ENCODE measurements at regions of chr22 and their contacts with region 1.

Region 1: GRCh38 chr22:17121227-17122195 is at the start of gene TMEM121B:
- DNase-seq: peak; percentile 72 to 78 (median 76)
- H3K4me3 ChIP-seq: peak within 1 kb of the TSS; percentile 44 to 79 (median 56)
- H3K4me3 Mint-ChIP-seq: peak within 1 kb of the TSS; percentile 87 to 94
- H3K27ac ChIP-seq: peak within 1 kb of the TSS in 1 of 2 donors; percentile 48
- H3K27ac Mint-ChIP-seq: peak within 1 kb of the TSS in 3 of 7 donors; percentile 38 to 60 (median 58)
- H3K4me1 ChIP-seq: peaks cover 43 to 48% of the 10 kb centered on the region in 2 donors
- H3K4me1 Mint-ChIP-seq: peaks cover 44% of the 10 kb centered on the region
- H3K27me3 ChIP-seq: peaks cover 3 to 8% of the 10 kb centered on the region in 2 donors
- H3K27me3 Mint-ChIP-seq: peaks cover 0 to 21% (median 8%) of the 10 kb centered on the region in 3 donors
- CTCF ChIP-seq: no peak
- polyA plus RNA-seq, gene TMEM121B: 1.4 to 3.2 (median 1.9) TPM

Region 2: DNA sequence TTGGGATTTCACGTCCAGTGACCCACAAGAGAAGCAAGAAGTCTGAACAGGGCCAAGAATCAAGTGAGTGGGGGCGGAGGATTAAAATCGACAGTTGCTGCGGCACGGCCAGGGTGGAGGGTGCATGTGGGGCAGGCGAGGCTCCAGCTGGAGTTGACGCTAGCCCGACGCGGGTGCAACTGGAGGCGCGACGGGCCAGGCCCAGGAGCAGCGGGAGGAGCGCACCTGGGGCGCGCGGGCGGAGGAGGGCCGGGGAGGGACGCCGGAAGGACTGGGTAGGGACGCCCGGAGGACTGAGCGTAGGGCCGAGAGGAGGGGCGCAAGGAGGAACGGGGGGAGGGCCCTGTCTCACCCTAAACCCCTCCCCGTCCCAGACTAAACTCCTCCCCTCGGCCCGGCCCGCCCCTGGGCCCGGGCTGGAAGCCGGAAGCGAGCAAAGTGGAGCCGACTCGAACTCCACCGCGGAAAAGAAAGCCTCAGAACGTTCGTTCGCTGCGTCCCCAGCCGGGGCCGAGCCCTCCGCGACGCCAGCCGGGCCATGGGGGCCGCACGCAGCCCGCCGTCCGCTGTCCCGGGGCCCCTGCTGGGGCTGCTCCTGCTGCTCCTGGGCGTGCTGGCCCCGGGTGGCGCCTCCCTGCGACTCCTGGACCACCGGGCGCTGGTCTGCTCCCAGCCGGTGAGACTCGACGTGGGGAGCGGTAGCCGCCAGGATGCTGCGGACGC is 36.8 kb before region 1 on chr22 and contains the start of gene IL17RA:
- intact Hi-C with region 1: loop called in 1 of 2 experiments (anchors 5 kb)
- DNase-seq: peak; percentile 84 to 90 (median 86)
- H3K4me3 ChIP-seq: peak within 1 kb of the TSS; percentile 89 to 91 (median 91)
- H3K4me3 Mint-ChIP-seq: peak within 1 kb of the TSS; percentile 96 to 99
- H3K27ac ChIP-seq: peak within 1 kb of the TSS; percentile 81 to 92
- H3K27ac Mint-ChIP-seq: peak within 1 kb of the TSS; percentile 90 to 96 (median 95)
- H3K4me1 ChIP-seq: peaks cover 40 to 50% of the 10 kb centered on the region in 2 donors
- H3K4me1 Mint-ChIP-seq: peaks cover 56% of the 10 kb centered on the region
- H3K27me3 ChIP-seq: no peaks in the 10 kb centered on the region
- H3K27me3 Mint-ChIP-seq: peaks cover 0 to 2% (median 0%) of the 10 kb centered on the region in 3 donors
- CTCF ChIP-seq: no peak
- polyA plus RNA-seq, gene IL17RA: 68.3 to 118 (median 96.7) TPM

Region 3: GRCh38 chr22:17091851-17092250 is 29.7 kb before region 1 on chr22:
- intact Hi-C with region 1: loop called in 1 of 2 experiments (anchors 2 kb)
- DNase-seq: no peak
- H3K4me3 ChIP-seq: peak overlapping the region in 1 of 3 experiments; percentile 16
- H3K4me3 Mint-ChIP-seq: peak overlapping the region in 1 of 2 donors; percentile 57
- H3K27ac ChIP-seq: peak overlapping the region; percentile 35 to 65
- H3K27ac Mint-ChIP-seq: peak overlapping the region; percentile 53 to 82 (median 70)
- H3K4me1 ChIP-seq: peaks cover 98 to 99% of the 10 kb centered on the region in 2 donors
- H3K4me1 Mint-ChIP-seq: peaks cover 96% of the 10 kb centered on the region
- H3K27me3 ChIP-seq: no peaks in the 10 kb centered on the region
- H3K27me3 Mint-ChIP-seq: peaks cover 0 to 2% (median 0%) of the 10 kb centered on the region in 3 donors
- CTCF ChIP-seq: no peak

Region 4: GRCh38 chr22:17098379-17098819 is 23.1 kb before region 1 on chr22:
- intact Hi-C with region 1: loop called (anchors 2 kb)
- DNase-seq: peak; percentile 79 to 89 (median 88)
- H3K4me3 ChIP-seq: peak overlapping the region in 1 of 3 experiments; percentile 57
- H3K4me3 Mint-ChIP-seq: peak overlapping the region; percentile 68 to 85
- H3K27ac ChIP-seq: peak overlapping the region; percentile 80 to 87
- H3K27ac Mint-ChIP-seq: peak overlapping the region; percentile 78 to 97 (median 93)
- H3K4me1 ChIP-seq: peaks cover 98 to 100% of the 10 kb centered on the region in 2 donors
- H3K4me1 Mint-ChIP-seq: peaks cover 97% of the 10 kb centered on the region
- H3K27me3 ChIP-seq: no peaks in the 10 kb centered on the region
- H3K27me3 Mint-ChIP-seq: peaks cover 0 to 2% (median 0%) of the 10 kb centered on the region in 3 donors
- CTCF ChIP-seq: no peak

Region 5: GRCh38 chr22:17106785-17107546 is 14.5 kb before region 1 on chr22:
- intact Hi-C with region 1: loop called in 1 of 2 experiments (anchors 2 kb)
- DNase-seq: peak; percentile 81 to 92 (median 91)
- H3K4me3 ChIP-seq: peak overlapping the region; percentile 1 to 65 (median 11)
- H3K4me3 Mint-ChIP-seq: peak overlapping the region; percentile 72 to 83
- H3K27ac ChIP-seq: peak overlapping the region; percentile 75 to 85
- H3K27ac Mint-ChIP-seq: peak overlapping the region; percentile 93 to 98 (median 96)
- H3K4me1 ChIP-seq: peaks cover 99 to 100% of the 10 kb centered on the region in 2 donors
- H3K4me1 Mint-ChIP-seq: peaks cover 85% of the 10 kb centered on the region
- H3K27me3 ChIP-seq: no peaks in the 10 kb centered on the region
- H3K27me3 Mint-ChIP-seq: peaks cover 0 to 2% (median 0%) of the 10 kb centered on the region in 3 donors
- CTCF ChIP-seq: no peak